ENCODE measurements at regions of chr10 and their contacts with region 1.

Region 1: GRCh38 chr10:107971973-107972372 is 807.5 kb upstream of the SORCS1 start:
- DNase-seq: peak; percentile 17
- ATAC-seq: no peak
- H3K4me3 ChIP-seq: no peak overlapping the region
- H3K27ac ChIP-seq: no peak overlapping the region
- H3K4me1 ChIP-seq: no peaks in the 10 kb centered on the region
- H3K27me3 ChIP-seq: no peaks in the 10 kb centered on the region
- CTCF ChIP-seq: no peak

Region 2: DNA sequence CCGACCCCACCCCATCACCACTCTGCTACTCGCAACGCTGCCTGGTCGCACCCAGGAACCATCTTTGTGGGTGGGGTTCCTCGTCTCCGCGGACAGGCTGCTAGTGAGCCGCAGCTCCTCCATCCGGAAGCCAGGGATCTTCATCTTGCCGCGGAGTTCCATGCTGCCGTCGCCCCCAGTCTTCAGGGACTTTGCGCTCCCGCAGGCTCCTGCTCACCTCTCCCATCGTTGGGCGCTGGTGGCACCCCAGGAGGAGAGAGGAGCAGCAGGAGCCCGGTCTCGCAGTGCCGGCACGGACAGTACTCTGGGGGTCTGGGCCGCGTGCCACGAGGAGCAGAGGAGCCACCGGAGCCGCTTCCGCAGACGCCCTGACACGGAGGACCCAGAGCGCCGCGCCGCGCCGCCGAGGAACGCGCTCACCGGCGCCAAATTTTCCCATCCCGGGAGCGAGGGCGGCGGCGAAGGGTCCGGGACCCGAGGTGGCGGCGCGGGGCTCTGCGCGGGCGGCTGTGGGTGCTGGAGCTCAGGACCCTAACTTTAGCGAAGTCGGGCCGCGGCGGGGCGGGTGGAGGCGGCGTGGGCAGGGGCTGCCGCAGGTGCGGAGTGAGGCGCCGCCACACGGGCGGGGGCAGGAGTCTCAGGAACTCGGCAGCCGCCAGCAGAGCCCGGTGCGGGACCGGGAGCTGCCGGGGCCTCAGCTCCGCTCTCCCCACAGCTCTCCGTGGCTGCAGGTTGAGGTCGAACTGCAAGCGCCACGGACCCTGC is 57.3 kb before region 1 on chr10:
- CTCF ChIA-PET with region 1: no interaction called
- POLR2A ChIA-PET with region 1: no interaction called
- in situ Hi-C with region 1: no loop called
- intact Hi-C with region 1: loop called (anchors 2 kb)
- DNase-seq: no peak
- ATAC-seq: no peak
- H3K4me3 ChIP-seq: no peak overlapping the region; a peak in 1 of 4 replicates
- H3K27ac ChIP-seq: no peak overlapping the region
- H3K4me1 ChIP-seq: no peaks in the 10 kb centered on the region
- H3K27me3 ChIP-seq: no peaks in the 10 kb centered on the region
- CTCF ChIP-seq: no peak

Measured in Panc1 (cell line).